CD8-positive, alpha-beta memory T cell (primary cell): ENCODE measurements at regions of chr6 and their contacts with region 1.

Region 1: DNA sequence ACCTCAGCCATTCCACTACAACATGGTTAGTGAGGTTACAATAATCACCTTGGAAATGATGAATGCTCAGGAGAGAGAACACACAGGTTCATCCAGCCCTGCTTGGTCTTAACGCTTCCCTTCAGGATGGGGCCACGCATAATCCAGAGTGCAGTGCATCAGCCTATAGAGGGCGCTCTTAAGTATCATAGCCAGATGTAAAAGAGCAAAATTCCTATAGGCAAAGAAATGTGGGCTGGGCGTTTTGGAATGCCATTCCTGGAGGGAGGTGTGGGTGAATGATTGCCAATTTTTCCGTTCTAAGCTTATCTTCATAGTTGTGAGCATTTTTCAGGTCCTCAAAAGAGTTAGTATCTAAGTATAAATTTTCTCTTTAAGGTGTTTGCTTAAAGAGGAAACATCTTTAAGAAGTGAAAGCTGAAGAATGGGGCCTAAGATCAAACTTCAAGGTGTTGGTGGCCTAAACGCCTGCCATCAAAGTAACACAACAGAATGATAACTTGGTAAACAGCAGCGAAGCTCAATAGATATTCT is 1.8 kb downstream of the RIPOR2 start:
- DNase-seq: peak in 4 of 5 donors; percentile 39 to 75 (median 61)
- H3K4me3 ChIP-seq: peak overlapping the region; percentile 72
- H3K4me3 Mint-ChIP-seq: peak overlapping the region; percentile 85 to 99 (median 99)
- H3K27ac ChIP-seq: peak overlapping the region; percentile 64
- H3K27ac Mint-ChIP-seq: peak overlapping the region; percentile 84 to 97 (median 90)
- H3K4me1 ChIP-seq: peaks cover 45% of the 10 kb centered on the region
- H3K4me1 Mint-ChIP-seq: peaks cover 54 to 65% (median 64%) of the 10 kb centered on the region in 3 donors
- H3K27me3 ChIP-seq: no peaks in the 10 kb centered on the region
- H3K27me3 Mint-ChIP-seq: no peaks in the 10 kb centered on the region

Region 2: GRCh38 chr6:24882295-24882694 is 51.6 kb before region 1 on chr6:
- CTCF ChIA-PET with region 1: interaction called, 13 read pairs
- POLR2A ChIA-PET with region 1: interaction called, 9 read pairs
- DNase-seq: no peak
- H3K4me3 ChIP-seq: no peak overlapping the region
- H3K4me3 Mint-ChIP-seq: peak overlapping the region in 4 of 7 donors; percentile 15 to 78 (median 32)
- H3K27ac ChIP-seq: no peak overlapping the region
- H3K27ac Mint-ChIP-seq: peak overlapping the region; percentile 64 to 96 (median 89)
- H3K4me1 ChIP-seq: peaks cover 76% of the 10 kb centered on the region
- H3K4me1 Mint-ChIP-seq: peaks cover 83 to 96% (median 94%) of the 10 kb centered on the region in 3 donors
- H3K27me3 ChIP-seq: no peaks in the 10 kb centered on the region
- H3K27me3 Mint-ChIP-seq: no peaks in the 10 kb centered on the region

Region 3: DNA sequence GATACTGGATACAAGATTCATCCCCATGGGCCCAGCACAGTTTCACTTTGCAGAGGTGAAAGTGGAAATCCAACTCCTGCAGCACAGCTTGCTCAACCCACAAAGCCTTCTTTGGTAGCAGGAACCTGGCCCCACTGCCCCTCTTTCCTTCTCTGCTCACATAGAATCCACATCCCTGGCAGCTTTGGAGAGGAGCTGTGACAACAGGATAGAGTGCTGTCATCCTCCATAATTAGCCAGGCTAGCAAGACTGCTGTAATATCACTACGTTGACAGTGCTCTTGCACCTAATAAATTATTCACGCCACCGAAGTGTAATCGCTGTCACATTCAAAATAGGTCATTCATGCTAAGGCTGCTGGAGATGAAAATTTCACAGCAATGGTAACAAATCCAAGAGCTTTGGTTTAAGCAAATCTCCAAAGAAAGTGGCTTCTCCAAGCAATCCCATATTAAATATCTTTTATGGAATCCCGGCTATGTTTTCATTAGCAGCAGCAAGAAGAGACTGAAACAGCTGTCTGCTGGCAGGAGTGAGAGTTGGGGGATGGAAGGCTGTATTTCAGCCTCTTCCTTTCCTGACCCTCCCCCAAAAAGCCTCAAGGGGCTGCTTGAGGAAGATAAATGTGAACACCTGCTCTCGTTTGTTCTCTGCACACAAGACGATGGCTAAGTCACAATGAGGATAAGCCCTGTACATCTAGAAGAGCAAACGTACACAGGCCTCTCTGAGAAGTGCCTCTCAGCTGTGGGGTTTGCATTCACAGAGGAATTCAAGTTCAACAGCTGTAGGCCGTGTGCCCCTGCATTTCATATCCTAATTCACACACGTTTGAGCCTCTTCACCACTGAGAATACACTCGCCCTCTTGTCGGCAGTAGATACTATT is 14.7 kb before region 1 on chr6:
- CTCF ChIA-PET with region 1: interaction called, 52 read pairs
- POLR2A ChIA-PET with region 1: interaction called, 5 read pairs
- DNase-seq: no peak
- H3K4me3 ChIP-seq: peak overlapping the region; percentile 40
- H3K4me3 Mint-ChIP-seq: peak overlapping the region; percentile 63 to 92 (median 71)
- H3K27ac ChIP-seq: no peak overlapping the region
- H3K27ac Mint-ChIP-seq: peak overlapping the region; percentile 67 to 98 (median 87)
- H3K4me1 ChIP-seq: peaks cover 97% of the 10 kb centered on the region
- H3K4me1 Mint-ChIP-seq: peaks cover 89 to 97% (median 97%) of the 10 kb centered on the region in 3 donors
- H3K27me3 ChIP-seq: no peaks in the 10 kb centered on the region
- H3K27me3 Mint-ChIP-seq: no peaks in the 10 kb centered on the region

Region 4: DNA sequence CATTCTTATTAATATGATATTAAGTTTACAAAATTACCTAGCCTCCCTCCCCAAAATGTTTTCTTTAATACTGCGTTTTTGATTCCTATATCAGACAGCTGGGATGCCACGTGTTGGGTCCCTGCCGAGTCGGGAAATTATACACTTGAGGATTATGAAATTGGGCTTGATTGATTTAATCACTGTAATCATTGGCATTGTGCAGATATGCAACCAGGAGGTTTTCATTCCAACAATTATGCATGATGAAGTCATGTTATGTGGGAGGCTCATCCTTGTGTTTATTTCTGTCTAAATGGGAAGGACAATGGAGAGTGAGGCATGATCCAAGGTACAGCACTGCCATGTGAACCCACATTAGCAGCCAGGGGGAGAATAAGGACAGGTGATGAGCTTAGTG is 32.4 kb after region 1 on chr6:
- CTCF ChIA-PET with region 1: interaction called, 61 read pairs
- POLR2A ChIA-PET with region 1: no interaction called
- DNase-seq: no peak
- H3K4me3 ChIP-seq: no peak overlapping the region
- H3K4me3 Mint-ChIP-seq: no peak overlapping the region
- H3K27ac ChIP-seq: no peak overlapping the region
- H3K27ac Mint-ChIP-seq: peak overlapping the region in 2 of 8 donors; percentile 33 to 83
- H3K4me1 ChIP-seq: peaks cover 66% of the 10 kb centered on the region
- H3K4me1 Mint-ChIP-seq: peaks cover 82 to 95% (median 95%) of the 10 kb centered on the region in 3 donors
- H3K27me3 ChIP-seq: no peaks in the 10 kb centered on the region
- H3K27me3 Mint-ChIP-seq: peaks cover 0 to 3% of the 10 kb centered on the region in 2 donors

Region 5: GRCh38 chr6:25017932-25018567 is 84.1 kb after region 1 on chr6:
- CTCF ChIA-PET with region 1: interaction called, 47 read pairs
- POLR2A ChIA-PET with region 1: interaction called, 4 read pairs
- DNase-seq: peak; percentile 67 to 86 (median 72)
- H3K4me3 ChIP-seq: no peak overlapping the region
- H3K4me3 Mint-ChIP-seq: peak overlapping the region in 3 of 7 donors; percentile 13 to 41 (median 22)
- H3K27ac ChIP-seq: no peak overlapping the region
- H3K27ac Mint-ChIP-seq: peak overlapping the region in 7 of 8 donors; percentile 43 to 97 (median 75)
- H3K4me1 ChIP-seq: peaks cover 29% of the 10 kb centered on the region
- H3K4me1 Mint-ChIP-seq: peaks cover 40 to 54% (median 48%) of the 10 kb centered on the region in 3 donors
- H3K27me3 ChIP-seq: no peaks in the 10 kb centered on the region
- H3K27me3 Mint-ChIP-seq: no peaks in the 10 kb centered on the region